PC-3 (cell line): ENCODE measurements at regions of chr4 and their contacts with region 1.

Region 1: DNA sequence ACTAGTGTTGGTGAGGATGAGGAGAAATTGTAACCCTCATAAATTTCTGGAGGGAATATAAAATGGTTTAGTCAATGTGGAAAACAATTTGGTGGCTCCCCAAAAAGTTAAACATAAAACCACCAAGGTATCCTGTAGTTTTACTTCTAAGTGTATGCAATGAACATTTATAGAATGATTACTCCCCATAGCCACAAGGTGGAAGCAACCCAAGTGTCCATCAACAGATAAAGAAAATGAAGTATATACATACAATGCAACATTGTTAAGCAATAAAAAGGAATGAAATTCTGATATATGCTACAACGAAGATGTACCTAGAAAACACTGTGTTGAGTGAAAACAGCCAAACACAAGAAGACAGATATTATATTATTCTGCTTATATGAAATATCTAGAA is 569.1 kb upstream of the GRID2 start:
- DNase-seq: peak; percentile 43
- ATAC-seq: 0 out of 2 replicates have a peak, but pooled peaks have one; percentile 29
- H3K4me3 ChIP-seq: no peak overlapping the region
- H3K27ac ChIP-seq: no peak overlapping the region
- H3K4me1 ChIP-seq: no peaks in the 10 kb centered on the region
- H3K27me3 ChIP-seq: no peaks in the 10 kb centered on the region
- CTCF ChIP-seq: peak; percentile 56

Region 2: GRCh38 chr4:90979556-90979955 is 755.1 kb before region 1 on chr4:
- CTCF ChIA-PET with region 1: no interaction called
- POLR2A ChIA-PET with region 1: no interaction called
- intact Hi-C with region 1: no loop called
- DNase-seq: no peak
- ATAC-seq: no peak
- H3K4me3 ChIP-seq: no peak overlapping the region
- H3K27ac ChIP-seq: no peak overlapping the region
- H3K4me1 ChIP-seq: peaks cover 10% of the 10 kb centered on the region; the same call in 1 of the 2 replicates
- H3K27me3 ChIP-seq: no peaks in the 10 kb centered on the region
- CTCF ChIP-seq: no peak

Region 3: GRCh38 chr4:91325495-91325894 is 409.2 kb before region 1 on chr4:
- CTCF ChIA-PET with region 1: no interaction called
- POLR2A ChIA-PET with region 1: no interaction called
- intact Hi-C with region 1: no loop called
- DNase-seq: peak; percentile 59
- ATAC-seq: no peak
- H3K4me3 ChIP-seq: no peak overlapping the region
- H3K27ac ChIP-seq: no peak overlapping the region
- H3K4me1 ChIP-seq: no peaks in the 10 kb centered on the region
- H3K27me3 ChIP-seq: no peaks in the 10 kb centered on the region
- CTCF ChIP-seq: no peak

Region 4: GRCh38 chr4:91909963-91910362 is 175.3 kb after region 1 on chr4:
- CTCF ChIA-PET with region 1: no interaction called
- POLR2A ChIA-PET with region 1: no interaction called
- intact Hi-C with region 1: no loop called
- DNase-seq: no peak
- ATAC-seq: no peak
- H3K4me3 ChIP-seq: no peak overlapping the region
- H3K27ac ChIP-seq: no peak overlapping the region
- H3K4me1 ChIP-seq: peaks cover 5% of the 10 kb centered on the region; the same call in 1 of the 2 replicates
- H3K27me3 ChIP-seq: no peaks in the 10 kb centered on the region
- CTCF ChIP-seq: no peak

Region 5: DNA sequence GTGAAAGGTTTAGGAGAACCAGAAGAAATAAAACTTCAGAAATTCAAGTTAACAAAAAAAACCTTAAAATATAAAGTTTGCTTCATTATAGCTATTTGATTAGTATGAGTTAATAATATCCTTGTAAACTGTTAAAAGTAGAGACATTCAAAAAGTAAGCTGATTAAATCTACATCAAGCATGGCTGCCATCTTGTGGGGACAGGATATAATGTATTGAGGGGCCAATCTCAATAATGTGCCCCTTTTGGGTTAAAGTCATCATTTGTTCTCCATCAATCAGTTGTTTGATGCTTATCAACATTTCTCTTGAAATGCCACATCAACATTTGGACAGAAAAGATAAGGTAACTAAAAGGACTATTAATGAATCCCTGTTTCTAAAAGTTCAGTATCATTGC is 564.5 kb after region 1 on chr4:
- CTCF ChIA-PET with region 1: no interaction called
- POLR2A ChIA-PET with region 1: no interaction called
- intact Hi-C with region 1: loop called (anchors 5 kb)
- DNase-seq: peak; percentile 27
- ATAC-seq: no peak
- H3K4me3 ChIP-seq: no peak overlapping the region
- H3K27ac ChIP-seq: no peak overlapping the region
- H3K4me1 ChIP-seq: 0 out of 2 replicates have a peak, but pooled peaks cover 4% of the 10 kb centered on the region
- H3K27me3 ChIP-seq: no peaks in the 10 kb centered on the region
- CTCF ChIP-seq: peak; percentile 63